ENCODE measurements at regions of chr1 and their contacts with region 1.

Region 1: GRCh38 chr1:244296447-244296846 is 155.3 kb downstream of the ADSS2 start:
- DNase-seq: peak in 6 of 42 donors; percentile 13 to 45 (median 29)

Region 2: GRCh38 chr1:244341455-244342450 is 45.3 kb after region 1 on chr1:
- intact Hi-C with region 1: loop called (anchors 10 kb)
- DNase-seq: peak in 41 of 42 donors; percentile 16 to 81 (median 56)